Right ventricle myocardium inferior (tissue), 1 donor: ENCODE measurements at regions of chr6 and their contacts with region 1.

Region 1: DNA sequence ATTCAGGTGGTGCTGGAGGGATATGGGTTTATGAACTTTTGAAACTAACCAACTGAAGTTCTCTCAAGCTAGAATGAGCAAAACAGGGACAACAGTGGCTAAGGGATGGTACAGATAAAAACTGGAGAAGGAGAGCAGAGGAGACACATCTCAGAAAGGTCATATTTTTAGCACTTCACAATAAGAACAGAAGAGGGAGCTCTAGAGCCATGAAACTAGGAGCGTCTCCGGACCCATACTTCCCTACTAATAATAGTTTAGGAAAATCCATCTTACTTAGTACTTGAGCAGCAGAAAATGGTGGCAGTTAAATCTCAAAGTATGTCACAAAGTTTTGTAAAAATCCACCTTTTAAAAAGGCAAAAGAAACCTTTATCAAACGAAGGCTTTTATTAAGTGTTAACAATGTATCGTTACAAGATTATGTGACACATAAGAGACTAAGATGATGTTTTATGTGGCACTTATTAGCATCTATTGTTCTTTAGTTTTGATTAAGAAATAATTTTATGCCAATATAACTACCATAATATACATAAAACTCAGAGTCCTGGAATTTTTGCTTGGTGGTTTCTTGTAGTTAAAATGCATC is 278.6 kb downstream of the TBC1D32 start:
- DNase-seq: no peak
- ATAC-seq: peak; percentile 60

Region 2: DNA sequence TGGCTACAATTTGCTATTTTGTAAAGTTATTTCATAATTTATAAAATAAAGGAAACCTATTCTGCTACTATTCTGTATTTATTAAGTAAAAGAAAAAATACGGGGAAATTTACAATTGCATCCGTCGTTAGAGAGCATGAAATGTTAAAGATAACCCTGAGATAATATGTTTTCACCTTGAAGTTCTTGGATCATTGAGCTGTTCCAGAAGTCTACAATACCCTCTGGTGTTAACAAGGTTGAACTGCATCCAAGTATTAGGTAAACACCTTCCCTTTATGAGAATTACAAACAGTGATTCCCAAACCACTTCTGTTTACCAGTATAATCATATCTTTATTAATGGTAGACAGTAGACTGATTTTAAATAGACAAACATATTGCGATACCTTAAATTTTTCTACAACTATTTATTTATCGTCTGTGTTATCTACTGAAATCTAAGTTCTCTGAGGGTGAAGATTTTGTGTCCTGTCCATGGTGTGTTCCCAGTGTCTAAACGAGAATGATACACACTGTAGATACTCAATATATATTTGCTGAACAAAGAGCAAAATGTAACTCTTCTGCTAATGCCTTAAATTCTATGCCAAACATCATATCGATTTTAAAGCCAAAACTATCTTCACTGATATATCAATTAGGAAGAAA is 250.4 kb after region 1 on chr6:
- intact Hi-C with region 1: loop called (anchors 10 kb)
- DNase-seq: no peak
- ATAC-seq: no peak

Region 3: GRCh38 chr6:122289762-122290539 is 1234.3 kb after region 1 on chr6:
- intact Hi-C with region 1: loop called (anchors 10 kb)
- DNase-seq: no peak
- ATAC-seq: no peak